Sigmoid colon (tissue), 7 donors: ENCODE measurements at regions of chr6 and their contacts with region 1.

Region 1: GRCh38 chr6:128520436-128521281 is at the start of gene PTPRK:
- DNase-seq: peak; percentile 97
- H3K4me3 ChIP-seq: peak within 1 kb of the TSS; percentile 60 to 86 (median 81)
- H3K27ac ChIP-seq: peak within 1 kb of the TSS; percentile 90 to 93 (median 92)
- H3K4me1 ChIP-seq: peaks cover 0 to 38% (median 35%) of the 10 kb centered on the region in 4 donors
- H3K27me3 ChIP-seq: no peaks in the 10 kb centered on the region
- CTCF ChIP-seq: peak in 1 of 4 experiments; percentile 71
- EP300 ChIP-seq: no peak
- POLR2A ChIP-seq: peak; percentile 82 to 94
- total RNA-seq, gene PTPRK: 46.7 to 51.3 (median 47.1) TPM

Region 2: DNA sequence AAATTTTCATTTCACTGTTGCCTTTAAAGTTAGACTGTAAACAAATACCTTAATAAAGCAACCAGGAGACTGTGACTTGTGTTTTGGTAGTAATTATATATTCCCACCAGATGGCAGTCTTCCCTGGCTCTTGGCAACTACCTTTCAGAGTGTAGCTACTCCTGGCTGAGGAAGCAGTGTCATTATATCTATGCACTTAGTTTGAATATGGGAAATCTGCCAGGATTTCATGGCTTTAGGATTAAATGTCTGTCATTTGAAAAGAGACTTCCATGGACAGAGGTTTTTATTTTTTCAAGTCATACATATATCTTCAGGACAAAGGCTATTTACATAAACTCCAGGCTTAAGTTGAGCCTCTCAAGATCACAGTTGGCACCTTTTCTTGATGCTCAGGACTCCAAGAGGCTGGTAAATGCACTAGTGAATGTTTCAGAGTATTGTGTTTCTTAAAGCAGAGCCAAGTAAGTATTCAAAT is 783.6 kb before region 1 on chr6:
- intact Hi-C with region 1: loop called (anchors 1 kb)
- DNase-seq: no peak
- H3K4me3 ChIP-seq: no peak overlapping the region
- H3K27ac ChIP-seq: no peak overlapping the region
- H3K4me1 ChIP-seq: peaks cover 0 to 11% (median 0%) of the 10 kb centered on the region in 4 donors
- H3K27me3 ChIP-seq: no peaks in the 10 kb centered on the region
- CTCF ChIP-seq: peak; percentile 21 to 55 (median 42)
- EP300 ChIP-seq: no peak
- POLR2A ChIP-seq: no peak

Region 3: DNA sequence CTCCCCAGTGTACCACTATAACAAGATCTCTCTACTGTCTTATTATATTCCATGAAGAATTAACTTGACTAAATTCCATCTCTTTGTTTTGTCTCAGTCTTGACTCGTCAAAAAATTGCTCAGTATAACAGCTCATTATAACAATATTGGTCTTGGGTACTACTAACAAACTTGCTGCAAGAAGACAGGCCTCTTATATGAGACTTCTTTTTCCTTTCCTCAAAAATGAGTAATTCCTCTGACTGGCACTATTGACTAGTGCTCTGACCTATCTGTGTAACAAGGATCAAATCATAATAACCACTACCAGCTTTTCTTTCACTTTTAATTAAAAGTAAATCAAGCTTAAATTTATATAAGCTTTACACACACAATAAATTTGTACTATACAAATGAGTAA is 528.5 kb before region 1 on chr6:
- intact Hi-C with region 1: loop called (anchors 10 kb)
- DNase-seq: no peak
- H3K4me3 ChIP-seq: no peak overlapping the region
- H3K27ac ChIP-seq: no peak overlapping the region
- H3K4me1 ChIP-seq: no peaks in the 10 kb centered on the region
- H3K27me3 ChIP-seq: no peaks in the 10 kb centered on the region
- CTCF ChIP-seq: no peak
- EP300 ChIP-seq: no peak
- POLR2A ChIP-seq: no peak

Region 4: DNA sequence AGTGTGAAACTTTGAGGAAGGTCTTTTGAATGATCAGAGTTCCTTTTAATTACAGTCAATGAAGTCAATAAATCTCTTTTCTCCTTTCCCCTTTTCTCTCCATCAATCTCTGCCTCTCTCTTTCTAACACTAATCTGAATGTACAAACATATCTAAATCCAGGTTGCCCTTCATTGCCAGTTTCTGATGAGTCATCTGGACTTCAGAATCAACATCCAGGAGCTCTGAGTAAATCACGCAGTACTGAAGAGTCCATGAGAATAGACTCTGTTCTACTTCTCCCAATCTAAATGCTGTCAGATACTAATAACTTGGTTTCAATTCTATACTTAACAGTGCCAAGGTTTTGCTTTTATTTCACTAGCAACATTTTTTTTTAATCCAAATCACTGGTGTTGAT is 381.1 kb before region 1 on chr6:
- intact Hi-C with region 1: loop called (anchors 10 kb)
- DNase-seq: no peak
- H3K4me3 ChIP-seq: no peak overlapping the region
- H3K27ac ChIP-seq: peak overlapping the region in 1 of 4 donors; percentile 33
- H3K4me1 ChIP-seq: peaks cover 0 to 32% (median 3%) of the 10 kb centered on the region in 4 donors
- H3K27me3 ChIP-seq: no peaks in the 10 kb centered on the region
- CTCF ChIP-seq: no peak
- EP300 ChIP-seq: no peak
- POLR2A ChIP-seq: no peak

Region 5: GRCh38 chr6:128230267-128230989 is 290.2 kb before region 1 on chr6:
- intact Hi-C with region 1: no loop called
- DNase-seq: no peak
- H3K4me3 ChIP-seq: no peak overlapping the region
- H3K27ac ChIP-seq: no peak overlapping the region
- H3K4me1 ChIP-seq: no peaks in the 10 kb centered on the region
- H3K27me3 ChIP-seq: no peaks in the 10 kb centered on the region
- CTCF ChIP-seq: no peak
- EP300 ChIP-seq: no peak
- POLR2A ChIP-seq: no peak

Region 6: DNA sequence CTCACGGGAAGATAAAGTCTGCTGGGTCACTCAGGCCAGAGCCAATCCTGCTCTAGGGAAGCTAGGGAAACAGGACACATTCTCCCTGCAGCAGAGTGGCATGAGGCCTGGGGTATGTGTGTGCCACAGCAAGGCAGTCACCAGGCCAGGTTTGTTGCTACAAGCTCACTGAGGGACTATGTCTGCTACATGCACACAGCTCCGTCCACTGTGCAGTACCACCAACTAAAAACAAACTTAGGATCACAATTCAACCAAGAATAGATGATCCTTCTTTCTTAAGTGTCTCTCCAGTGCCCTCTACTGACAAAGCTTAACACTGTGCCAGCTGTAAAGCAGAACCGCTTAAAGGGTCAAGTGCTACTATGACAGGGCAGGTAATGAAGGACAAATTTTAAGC is 192.8 kb before region 1 on chr6:
- intact Hi-C with region 1: loop called (anchors 2 kb)
- DNase-seq: no peak
- H3K4me3 ChIP-seq: no peak overlapping the region
- H3K27ac ChIP-seq: no peak overlapping the region
- H3K4me1 ChIP-seq: peaks cover 0 to 26% (median 8%) of the 10 kb centered on the region in 4 donors
- H3K27me3 ChIP-seq: no peaks in the 10 kb centered on the region
- CTCF ChIP-seq: peak in 1 of 4 experiments; percentile 39
- EP300 ChIP-seq: no peak
- POLR2A ChIP-seq: no peak

Region 7: DNA sequence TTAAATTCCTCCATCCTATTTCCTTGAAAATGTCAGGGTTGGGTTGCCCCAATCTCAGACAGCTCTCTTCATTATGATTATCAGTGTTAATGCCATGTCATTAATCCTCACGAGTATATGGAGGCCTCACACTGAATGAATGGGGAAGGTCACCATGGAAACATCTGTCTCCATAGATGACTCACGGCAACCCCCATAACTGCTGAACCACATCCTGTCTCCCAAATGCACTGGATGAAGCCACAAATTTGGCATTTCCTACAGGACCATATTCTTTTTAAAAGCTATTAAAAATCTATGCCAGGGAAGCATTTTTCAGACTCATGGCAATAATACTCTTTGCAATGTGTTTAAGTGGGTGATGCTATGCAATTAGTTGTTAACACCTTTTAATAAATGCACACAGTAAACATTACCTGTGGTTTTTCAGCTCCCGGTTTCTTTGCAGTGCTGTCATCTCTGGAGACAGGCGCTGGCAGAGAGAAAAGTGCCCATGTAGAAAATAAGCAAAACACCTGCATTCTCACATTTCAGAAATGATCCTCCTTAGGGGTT is 79.8 kb after region 1 on chr6:
- intact Hi-C with region 1: no loop called
- DNase-seq: no peak
- H3K4me3 ChIP-seq: no peak overlapping the region
- H3K27ac ChIP-seq: no peak overlapping the region
- H3K4me1 ChIP-seq: peaks cover 0 to 6% (median 0%) of the 10 kb centered on the region in 4 donors
- H3K27me3 ChIP-seq: no peaks in the 10 kb centered on the region
- CTCF ChIP-seq: no peak
- EP300 ChIP-seq: no peak
- POLR2A ChIP-seq: no peak

Region 8: DNA sequence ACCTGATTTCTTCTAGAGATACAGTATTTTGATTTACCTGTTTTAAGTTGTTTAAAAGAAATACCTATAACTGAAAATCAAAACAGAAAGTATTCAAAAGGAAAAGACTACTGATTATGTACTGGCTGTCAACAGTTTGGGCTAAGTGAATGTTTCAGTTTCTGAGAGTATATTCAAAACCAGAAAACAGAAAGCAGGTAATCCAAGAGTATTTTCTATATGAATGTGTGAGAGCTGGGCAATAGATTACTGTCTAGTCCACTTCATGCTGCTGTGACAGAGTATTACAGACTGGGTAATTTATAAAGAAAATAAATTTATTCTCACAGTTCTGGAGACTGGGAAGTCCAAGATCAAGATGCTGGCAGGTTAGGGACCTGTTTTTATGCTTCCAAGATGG is 928.3 kb after region 1 on chr6:
- intact Hi-C with region 1: no loop called
- DNase-seq: no peak
- H3K4me3 ChIP-seq: no peak overlapping the region
- H3K27ac ChIP-seq: no peak overlapping the region
- H3K4me1 ChIP-seq: no peaks in the 10 kb centered on the region
- H3K27me3 ChIP-seq: no peaks in the 10 kb centered on the region
- CTCF ChIP-seq: no peak
- EP300 ChIP-seq: no peak
- POLR2A ChIP-seq: no peak